HEK293T (cell line): ENCODE measurements at regions of chr19 and their contacts with region 1.

Region 1: GRCh38 chr19:7408251-7408650 is 59.5 kb downstream of the ARHGEF18 start:
- DNase-seq: no peak

Region 2: DNA sequence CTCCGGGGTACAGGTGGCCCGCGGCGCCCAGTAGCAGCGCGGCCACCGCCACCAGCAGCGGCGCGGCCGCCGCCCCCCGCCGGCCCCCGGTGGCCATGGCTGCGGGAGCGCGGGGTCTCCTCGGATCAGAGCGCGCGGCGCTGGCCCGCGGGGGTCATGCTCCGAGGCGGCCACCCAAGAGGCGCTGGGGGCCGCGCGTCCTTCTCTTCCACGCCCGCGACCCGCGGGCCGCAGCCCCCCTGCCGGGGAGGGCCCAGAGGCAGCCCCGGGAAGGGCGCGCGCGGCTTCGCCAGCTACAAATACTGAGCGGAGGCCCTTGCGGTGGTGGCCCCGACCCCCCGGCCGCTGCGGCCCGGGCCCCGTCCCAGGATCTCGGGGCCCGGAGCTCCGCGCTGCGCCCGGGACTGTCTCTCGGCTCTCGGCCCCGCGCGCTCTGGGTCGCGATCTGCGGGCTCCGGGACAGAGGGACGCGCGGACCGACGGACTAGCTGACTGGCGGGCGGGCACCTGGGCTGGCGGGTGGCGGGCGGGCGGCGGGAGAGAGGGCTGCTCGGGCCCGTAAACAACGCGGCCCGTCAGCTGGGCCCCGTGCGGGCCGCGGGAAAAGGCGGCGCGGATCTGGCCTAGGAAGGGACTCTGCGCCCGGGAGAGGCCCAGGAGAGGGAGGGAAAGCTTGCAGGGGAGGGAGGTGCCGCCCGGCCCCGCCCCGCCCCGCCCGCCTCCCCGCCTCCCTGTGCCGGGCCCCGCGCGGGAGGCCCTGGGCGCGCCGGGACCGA is 114.3 kb before region 1 on chr19 and contains the start of gene INSR:
- CTCF ChIA-PET with region 1: no interaction called
- POLR2A ChIA-PET with region 1: no interaction called
- DNase-seq: peak; percentile 94

Region 3: DNA sequence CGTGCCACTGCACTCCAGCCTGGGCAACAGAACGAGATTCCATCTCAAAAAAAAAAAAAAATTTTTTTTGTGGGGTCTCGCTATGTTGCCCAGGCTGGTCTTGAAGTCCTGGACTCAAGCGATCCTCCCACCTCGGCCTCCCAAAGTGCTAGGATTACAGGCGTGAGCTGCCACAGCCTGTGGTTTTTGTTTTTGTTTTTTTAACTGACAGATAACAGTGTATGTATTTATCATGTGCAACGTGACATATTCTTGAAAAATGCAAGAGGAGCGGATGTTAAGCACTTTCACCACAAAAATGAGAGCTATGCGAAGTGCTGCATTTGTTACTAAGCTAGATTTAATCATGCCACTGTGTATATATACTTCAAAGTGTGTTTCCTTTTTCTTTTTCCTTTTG is 10.6 kb before region 1 on chr19:
- CTCF ChIA-PET with region 1: interaction called, 14 read pairs
- POLR2A ChIA-PET with region 1: interaction called, 3 read pairs
- DNase-seq: no peak